Activated CD4-positive, alpha-beta memory T cell treated with anti-CD3 and anti-CD28 coated beads for 36 hours (primary cell): ENCODE measurements at regions of chr14 and their contacts with region 1.

Region 1: DNA sequence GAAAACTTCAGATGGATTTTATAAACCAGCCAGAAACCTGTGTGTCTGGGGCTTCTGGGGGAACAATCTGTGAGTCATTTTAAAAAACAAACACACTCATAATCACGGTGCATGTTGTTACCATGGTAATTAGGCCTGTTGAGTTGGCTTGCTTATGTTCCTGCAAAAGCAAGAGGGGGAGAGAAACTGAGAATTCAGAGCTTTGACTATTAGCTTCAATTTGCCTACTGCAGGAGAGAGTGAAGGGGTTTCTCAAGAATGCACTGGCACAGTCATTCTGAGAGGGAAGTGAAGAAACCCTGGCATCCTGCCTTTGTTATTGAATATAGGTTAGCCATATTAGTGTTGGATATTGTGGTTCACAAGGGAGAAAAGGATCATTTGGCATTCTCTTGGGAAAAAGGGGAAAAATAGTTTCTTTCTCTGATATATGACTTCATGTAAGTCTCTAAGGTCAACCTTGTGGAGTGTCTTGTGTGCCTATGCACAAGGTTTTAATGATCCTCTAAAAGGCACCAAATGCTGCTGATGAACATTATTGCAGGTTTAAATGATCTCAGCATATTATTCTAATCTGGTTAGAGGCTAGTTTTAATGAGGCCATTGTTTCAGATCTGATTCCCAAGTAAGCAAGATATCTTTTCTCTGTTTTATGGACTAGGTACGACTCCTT is 12.9 kb downstream of the GNG2 start:
- DNase-seq: peak; percentile 68
- H3K4me3 Mint-ChIP-seq: peak overlapping the region; percentile 30
- H3K27ac Mint-ChIP-seq: peak overlapping the region; percentile 85
- H3K4me1 Mint-ChIP-seq: peaks cover 60% of the 10 kb centered on the region
- H3K27me3 Mint-ChIP-seq: no peaks in the 10 kb centered on the region

Region 2: GRCh38 chr14:51704545-51704944 is 168.8 kb before region 1 on chr14:
- CTCF ChIA-PET with region 1: no interaction called
- POLR2A ChIA-PET with region 1: no interaction called
- intact Hi-C with region 1: no loop called
- DNase-seq: no peak
- H3K4me3 Mint-ChIP-seq: no peak overlapping the region
- H3K27ac Mint-ChIP-seq: no peak overlapping the region
- H3K4me1 Mint-ChIP-seq: no peaks in the 10 kb centered on the region
- H3K27me3 Mint-ChIP-seq: no peaks in the 10 kb centered on the region

Region 3: GRCh38 chr14:51860164-51860824 is 13.1 kb before region 1 on chr14 and contains the start of gene GNG2:
- CTCF ChIA-PET with region 1: interaction called, 6 read pairs
- POLR2A ChIA-PET with region 1: interaction called, 20 read pairs
- intact Hi-C with region 1: loop called (anchors 1 kb)
- DNase-seq: peak; percentile 91
- H3K4me3 Mint-ChIP-seq: peak within 1 kb of the TSS; percentile 96
- H3K27ac Mint-ChIP-seq: peak within 1 kb of the TSS; percentile 96
- H3K4me1 Mint-ChIP-seq: peaks cover 52% of the 10 kb centered on the region
- H3K27me3 Mint-ChIP-seq: no peaks in the 10 kb centered on the region
- total RNA-seq, gene GNG2: 146 TPM

Region 4: DNA sequence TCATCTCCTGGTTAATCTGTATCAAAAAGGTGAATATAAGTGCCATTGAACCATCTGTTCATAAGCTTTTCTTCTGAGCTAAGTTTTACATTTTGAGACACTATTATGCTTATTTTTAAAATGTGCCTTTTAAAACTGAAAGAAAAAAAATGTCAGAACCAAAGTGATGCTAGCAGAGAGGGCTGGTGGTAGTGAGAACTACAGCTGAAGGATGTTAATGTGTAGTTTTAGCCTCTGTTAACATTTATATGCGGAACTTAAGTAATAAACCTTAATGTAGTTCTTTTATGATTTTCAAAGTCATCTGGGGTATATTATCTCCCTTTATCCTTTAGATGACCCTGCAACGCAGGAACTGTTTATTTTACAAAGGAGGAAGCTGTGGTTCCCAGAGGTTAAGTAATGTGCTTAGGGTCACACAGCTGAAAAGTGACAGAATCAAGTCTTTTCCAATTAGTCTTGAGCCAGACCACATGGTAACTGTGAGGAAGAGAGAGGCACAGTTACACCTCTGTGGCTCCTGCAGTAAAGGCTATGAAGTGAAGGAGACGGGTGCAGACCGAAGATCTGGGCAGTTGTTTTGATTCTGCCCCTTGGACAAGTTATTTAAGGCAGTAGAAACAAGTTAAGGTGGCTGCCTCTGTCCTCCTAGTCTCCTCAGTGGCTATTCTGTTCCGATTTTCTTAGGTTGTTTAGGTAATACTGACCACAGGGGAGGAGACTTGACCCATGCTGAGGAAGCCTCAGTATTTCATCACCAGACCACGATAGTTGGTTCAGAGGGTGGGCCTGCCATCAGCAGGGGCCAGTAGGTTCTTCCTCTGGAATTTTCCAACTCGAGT is 10.9 kb after region 1 on chr14:
- CTCF ChIA-PET with region 1: interaction called, 3 read pairs
- POLR2A ChIA-PET with region 1: interaction called, 4 read pairs
- intact Hi-C with region 1: loop called (anchors 1 kb)
- DNase-seq: no peak
- H3K4me3 Mint-ChIP-seq: peak overlapping the region; percentile 25
- H3K27ac Mint-ChIP-seq: peak overlapping the region; percentile 30
- H3K4me1 Mint-ChIP-seq: peaks cover 68% of the 10 kb centered on the region
- H3K27me3 Mint-ChIP-seq: no peaks in the 10 kb centered on the region

Region 5: GRCh38 chr14:51929906-51930682 is 56.7 kb after region 1 on chr14:
- CTCF ChIA-PET with region 1: no interaction called
- POLR2A ChIA-PET with region 1: interaction called, 3 read pairs
- intact Hi-C with region 1: loop called (anchors 1 kb)
- DNase-seq: no peak
- H3K4me3 Mint-ChIP-seq: no peak overlapping the region
- H3K27ac Mint-ChIP-seq: peak overlapping the region; percentile 81
- H3K4me1 Mint-ChIP-seq: peaks cover 69% of the 10 kb centered on the region
- H3K27me3 Mint-ChIP-seq: no peaks in the 10 kb centered on the region

Region 6: DNA sequence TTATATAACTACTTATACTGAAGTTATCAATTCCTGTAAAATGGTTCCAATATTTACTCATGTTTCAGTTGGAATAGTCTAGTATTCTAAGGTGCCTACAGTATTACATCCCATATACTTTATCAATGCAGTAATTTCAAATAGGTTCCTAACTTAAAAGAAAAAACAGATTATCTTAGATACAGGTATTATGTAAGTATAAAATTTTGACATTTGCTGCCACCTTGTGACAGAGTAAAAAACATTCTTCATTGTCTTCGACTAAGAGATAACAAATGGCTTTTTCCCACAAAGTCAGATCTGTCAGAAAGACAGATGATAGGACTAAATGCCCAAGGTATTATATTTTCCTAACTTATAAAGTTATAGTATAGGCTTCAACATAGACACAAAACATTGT is 600.2 kb after region 1 on chr14:
- CTCF ChIA-PET with region 1: no interaction called
- POLR2A ChIA-PET with region 1: no interaction called
- intact Hi-C with region 1: no loop called
- DNase-seq: no peak
- H3K4me3 Mint-ChIP-seq: no peak overlapping the region
- H3K27ac Mint-ChIP-seq: no peak overlapping the region
- H3K4me1 Mint-ChIP-seq: peaks cover 4% of the 10 kb centered on the region
- H3K27me3 Mint-ChIP-seq: no peaks in the 10 kb centered on the region